IMR-90 (cell line): ENCODE measurements at regions of chr11 and their contacts with region 1.

Region 1: DNA sequence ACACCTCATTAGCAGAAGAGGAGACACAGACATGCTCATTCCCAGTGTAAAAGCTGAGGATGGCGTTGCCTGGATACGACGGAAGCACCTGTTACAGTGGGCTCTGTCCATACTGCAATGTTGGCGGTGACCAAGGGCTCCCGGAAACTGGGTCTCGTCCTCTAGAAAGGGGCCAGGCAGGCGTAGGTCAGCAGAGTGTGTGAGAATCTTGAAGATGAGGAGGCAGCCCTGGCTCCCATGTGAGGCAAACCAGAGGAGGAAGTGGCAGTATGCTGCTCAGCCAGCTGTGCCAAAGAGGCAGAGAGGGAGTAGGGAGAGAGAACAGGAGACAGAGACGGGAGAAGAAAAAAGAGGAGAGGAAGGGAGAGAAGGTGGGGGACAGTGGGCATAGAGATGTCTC is 10.3 kb downstream of the LTO1 start:
- DNase-seq: no peak
- ATAC-seq: no peak
- H3K4me3 ChIP-seq: no peak overlapping the region
- H3K27ac ChIP-seq: no peak overlapping the region
- H3K4me1 ChIP-seq: peaks cover 2% of the 10 kb centered on the region; the same call in 1 of the 2 replicates
- H3K27me3 ChIP-seq: no peaks in the 10 kb centered on the region
- CTCF ChIP-seq: no peak
- POLR2A ChIP-seq: no peak
- RAD21 ChIP-seq: no peak

Region 2: DNA sequence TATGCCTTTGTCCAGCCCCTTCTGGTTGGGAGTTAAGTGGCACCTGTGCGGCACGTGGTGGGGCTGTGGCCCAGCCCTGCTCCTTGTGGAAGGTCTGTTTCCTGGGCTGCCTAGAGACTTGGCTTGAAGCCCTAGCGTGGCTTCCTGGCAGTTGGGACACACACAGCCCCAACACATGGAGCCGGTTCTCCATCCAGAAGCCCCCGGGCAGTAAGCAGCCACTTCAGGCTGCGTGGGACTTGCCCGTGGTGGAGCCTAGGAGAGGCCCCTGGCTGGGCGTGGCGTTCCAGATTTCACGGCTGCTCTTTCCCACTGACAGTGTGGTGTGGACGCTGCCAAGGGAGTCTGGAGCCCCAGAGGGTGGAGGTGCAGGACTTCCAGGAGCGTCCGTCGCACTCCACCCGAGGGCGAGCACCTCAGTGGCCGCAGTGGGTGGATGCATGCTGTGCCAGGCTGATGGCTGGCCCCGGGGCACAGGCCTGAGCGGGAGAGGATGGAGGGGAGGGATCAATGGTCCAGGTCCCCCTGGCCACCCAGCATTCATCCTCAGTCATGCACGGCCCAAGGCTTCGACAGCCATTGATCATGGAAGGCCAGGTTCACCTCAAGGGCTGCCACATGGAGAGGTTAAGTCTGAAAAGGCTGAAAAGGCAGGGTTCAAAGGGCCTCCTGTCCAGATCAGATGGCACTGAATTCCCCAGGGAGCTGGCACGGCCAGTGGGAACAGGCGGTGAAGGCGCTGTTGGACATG is 14.6 kb before region 1 on chr11:
- CTCF ChIA-PET with region 1: no interaction called
- POLR2A ChIA-PET with region 1: no interaction called
- dilution Hi-C with region 1: no loop called
- in situ Hi-C with region 1: no loop called
- intact Hi-C with region 1: no loop called
- DNase-seq: no peak
- ATAC-seq: no peak
- H3K4me3 ChIP-seq: no peak overlapping the region
- H3K27ac ChIP-seq: no peak overlapping the region
- H3K4me1 ChIP-seq: peaks cover 10% of the 10 kb centered on the region
- H3K27me3 ChIP-seq: no peaks in the 10 kb centered on the region
- CTCF ChIP-seq: no peak
- POLR2A ChIP-seq: 0 out of 2 replicates have a peak, but pooled peaks have one; percentile 7
- RAD21 ChIP-seq: no peak

Region 3: GRCh38 chr11:70158201-70158600 is 493.3 kb after region 1 on chr11:
- CTCF ChIA-PET with region 1: no interaction called
- POLR2A ChIA-PET with region 1: interaction called, 12 read pairs
- dilution Hi-C with region 1: no loop called
- in situ Hi-C with region 1: no loop called
- intact Hi-C with region 1: no loop called
- DNase-seq: peak; percentile 19
- ATAC-seq: peak; percentile 68; the same call in 1 of the 2 replicates
- H3K4me3 ChIP-seq: no peak overlapping the region
- H3K27ac ChIP-seq: no peak overlapping the region
- H3K4me1 ChIP-seq: peaks cover 2% of the 10 kb centered on the region; the same call in 1 of the 2 replicates
- H3K27me3 ChIP-seq: no peaks in the 10 kb centered on the region
- CTCF ChIP-seq: peak; percentile 45
- POLR2A ChIP-seq: no peak
- RAD21 ChIP-seq: peak; percentile 60